OCI-LY7 (cell line): ENCODE measurements at regions of chr1 and their contacts with region 1.

Region 1: DNA sequence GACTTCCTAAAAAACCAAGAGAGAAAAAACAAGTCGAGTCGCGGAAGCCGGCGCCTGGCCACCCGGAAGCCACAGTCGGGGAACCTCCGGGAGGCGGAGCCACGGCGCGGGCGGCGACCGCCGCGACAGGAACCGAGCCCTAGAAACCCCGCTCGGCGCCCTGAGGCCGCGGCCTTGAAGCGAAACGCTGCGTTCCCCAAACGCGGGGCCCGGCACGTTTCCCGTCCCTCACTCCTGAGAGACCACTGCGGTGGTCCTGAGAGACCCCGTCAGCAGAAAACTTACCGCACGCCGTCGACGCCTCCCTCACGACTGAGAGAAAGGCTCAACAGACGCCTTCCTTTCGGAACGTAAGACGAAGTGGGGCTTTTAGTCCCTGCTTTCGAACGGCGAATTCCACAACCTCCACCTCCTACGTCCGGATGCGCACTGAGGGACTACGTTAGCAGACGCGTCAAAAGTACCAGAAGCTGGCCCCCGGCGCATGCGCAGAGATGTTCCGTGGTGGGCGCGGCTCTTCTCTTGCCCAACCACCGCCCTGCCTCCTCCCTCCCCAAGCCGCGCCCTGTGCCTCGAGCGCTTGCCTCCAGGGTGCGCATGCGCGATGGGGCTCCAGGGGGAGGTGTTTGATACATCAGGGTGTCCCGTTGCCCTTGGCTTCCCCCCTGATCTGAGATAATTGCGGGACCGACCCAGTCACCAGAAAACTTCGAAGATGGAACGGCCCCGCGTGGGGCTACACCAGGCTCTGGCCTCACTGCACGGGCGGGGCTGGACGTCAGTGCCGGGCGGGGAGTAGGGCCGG is at the start of gene RSRP1:
- DNase-seq: peak; percentile 100
- H3K4me3 ChIP-seq: peak within 1 kb of the TSS; percentile 78
- H3K27ac ChIP-seq: peak within 1 kb of the TSS; percentile 85
- H3K4me1 ChIP-seq: peaks cover 32% of the 10 kb centered on the region
- CTCF ChIP-seq: no peak
- total RNA-seq, gene RSRP1: 141 and 147 TPM in 2 replicates

Region 2: GRCh38 chr1:25031966-25032667 is 215.1 kb before region 1 on chr1:
- CTCF ChIA-PET with region 1: no interaction called
- POLR2A ChIA-PET with region 1: no interaction called
- intact Hi-C with region 1: no loop called
- DNase-seq: peak; percentile 86
- H3K4me3 ChIP-seq: peak overlapping the region; percentile 39
- H3K27ac ChIP-seq: peak overlapping the region; percentile 74
- H3K4me1 ChIP-seq: peaks cover 66% of the 10 kb centered on the region
- CTCF ChIP-seq: peak; percentile 56; the same call in 1 of the 2 replicates

Region 3: DNA sequence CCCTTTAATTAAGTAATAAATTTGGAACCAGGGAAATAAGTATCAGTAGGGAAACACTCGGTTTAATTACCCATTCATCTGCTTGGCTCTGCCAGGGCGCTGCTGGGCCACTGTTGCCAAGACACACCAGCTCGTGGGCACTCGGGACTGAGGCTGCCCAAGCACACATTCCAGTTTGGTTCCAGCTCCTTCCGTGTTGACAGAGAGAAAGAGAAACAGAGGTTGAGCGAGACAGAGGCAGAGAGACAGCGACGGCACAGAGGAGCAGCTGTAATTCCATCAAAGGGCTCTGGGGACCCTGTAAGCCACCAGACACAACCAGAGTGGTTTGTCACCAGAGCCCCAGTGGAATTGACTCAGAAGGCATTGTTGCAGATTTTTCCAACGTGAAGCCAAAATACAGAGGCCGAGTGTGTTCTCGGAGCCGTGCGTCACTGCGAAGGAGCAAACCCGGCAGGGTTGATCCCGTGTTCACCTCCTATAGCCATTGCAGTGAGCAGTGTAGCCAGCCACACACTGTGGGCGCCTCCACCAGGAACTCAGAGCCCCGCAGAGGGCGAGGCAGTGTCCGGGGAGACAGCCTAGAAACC is 48.5 kb before region 1 on chr1:
- CTCF ChIA-PET with region 1: no interaction called
- POLR2A ChIA-PET with region 1: no interaction called
- intact Hi-C with region 1: no loop called
- DNase-seq: no peak
- H3K4me3 ChIP-seq: no peak overlapping the region
- H3K27ac ChIP-seq: no peak overlapping the region
- H3K4me1 ChIP-seq: no peaks in the 10 kb centered on the region
- CTCF ChIP-seq: 0 out of 2 replicates have a peak, but pooled peaks have one; percentile 18

Region 4: GRCh38 chr1:25219656-25220251 is 27.5 kb before region 1 on chr1:
- CTCF ChIA-PET with region 1: no interaction called
- POLR2A ChIA-PET with region 1: no interaction called
- intact Hi-C with region 1: no loop called
- DNase-seq: no peak
- H3K4me3 ChIP-seq: no peak overlapping the region
- H3K27ac ChIP-seq: no peak overlapping the region
- H3K4me1 ChIP-seq: peaks cover 11% of the 10 kb centered on the region
- CTCF ChIP-seq: no peak

Region 5: DNA sequence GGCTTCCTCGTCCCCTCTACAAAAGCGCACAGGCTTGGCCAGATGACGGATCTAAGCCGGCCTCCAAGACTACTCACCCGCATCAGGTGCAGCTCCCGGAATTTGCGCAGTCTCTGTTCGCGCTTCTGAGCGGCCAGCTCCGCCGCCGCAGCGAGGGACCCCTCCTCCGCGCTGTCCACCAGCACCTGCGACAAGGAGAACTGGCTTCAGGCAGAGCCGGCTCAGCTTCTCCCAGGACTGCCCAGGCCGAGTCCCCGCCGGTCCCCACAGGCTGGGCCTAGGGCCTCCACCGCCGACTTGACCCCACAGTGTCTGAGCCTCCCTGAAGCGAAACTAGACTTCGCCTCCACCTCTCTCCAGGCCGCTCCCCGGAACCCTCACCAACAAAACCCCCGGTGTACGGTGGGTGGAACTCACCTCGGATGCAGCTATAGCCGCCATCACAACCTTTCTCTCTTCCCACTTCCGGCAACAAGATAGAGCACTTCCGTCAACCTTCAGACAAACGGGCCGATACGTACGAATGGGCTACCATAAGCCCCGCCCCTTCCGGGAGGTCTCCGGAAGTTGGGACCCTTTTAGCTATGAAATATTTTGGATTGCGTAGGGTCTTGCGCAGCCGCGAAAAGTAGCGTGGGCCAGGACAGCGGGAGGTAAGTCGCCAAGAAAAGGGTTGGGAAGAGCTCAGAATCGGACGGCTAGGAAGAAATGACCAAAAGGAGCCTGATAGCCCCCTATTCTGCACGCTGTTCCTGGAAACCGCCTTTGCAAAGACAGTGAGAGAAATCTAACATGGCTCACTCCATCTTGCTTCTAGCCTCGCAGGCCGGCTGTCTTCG is 15.0 kb before region 1 on chr1 and contains the start of gene SYF2:
- CTCF ChIA-PET with region 1: interaction called, 3 read pairs
- POLR2A ChIA-PET with region 1: interaction called, 9 read pairs
- intact Hi-C with region 1: loop called (anchors 1 kb)
- DNase-seq: peak; percentile 97
- H3K4me3 ChIP-seq: peak within 1 kb of the TSS; percentile 90
- H3K27ac ChIP-seq: peak within 1 kb of the TSS; percentile 86
- H3K4me1 ChIP-seq: peaks cover 49% of the 10 kb centered on the region
- CTCF ChIP-seq: no peak
- total RNA-seq, gene SYF2: 29.9 and 32.9 TPM in 2 replicates

Region 6: GRCh38 chr1:25338188-25338981 is 91.2 kb after region 1 on chr1 and contains the start of gene TMEM50A:
- CTCF ChIA-PET with region 1: no interaction called
- POLR2A ChIA-PET with region 1: no interaction called
- intact Hi-C with region 1: loop called (anchors 5 kb)
- DNase-seq: peak; percentile 87
- H3K4me3 ChIP-seq: peak within 1 kb of the TSS; percentile 93
- H3K27ac ChIP-seq: peak within 1 kb of the TSS; percentile 86
- H3K4me1 ChIP-seq: peaks cover 19% of the 10 kb centered on the region
- CTCF ChIP-seq: no peak
- total RNA-seq, gene TMEM50A: 56.2 and 68.4 TPM in 2 replicates

Region 7: GRCh38 chr1:25503551-25504426 is 256.6 kb after region 1 on chr1:
- CTCF ChIA-PET with region 1: no interaction called
- POLR2A ChIA-PET with region 1: no interaction called
- intact Hi-C with region 1: no loop called
- DNase-seq: peak; percentile 72
- H3K4me3 ChIP-seq: no peak overlapping the region
- H3K27ac ChIP-seq: no peak overlapping the region
- H3K4me1 ChIP-seq: peaks cover 15% of the 10 kb centered on the region
- CTCF ChIP-seq: peak; percentile 91